ENCODE measurements at regions of chr11 and their contacts with region 1.

Region 1: GRCh38 chr11:112113539-112114457 is 27.1 kb downstream of the SDHD start:
- DNase-seq: no peak
- ATAC-seq: peak; percentile 80

Region 2: DNA sequence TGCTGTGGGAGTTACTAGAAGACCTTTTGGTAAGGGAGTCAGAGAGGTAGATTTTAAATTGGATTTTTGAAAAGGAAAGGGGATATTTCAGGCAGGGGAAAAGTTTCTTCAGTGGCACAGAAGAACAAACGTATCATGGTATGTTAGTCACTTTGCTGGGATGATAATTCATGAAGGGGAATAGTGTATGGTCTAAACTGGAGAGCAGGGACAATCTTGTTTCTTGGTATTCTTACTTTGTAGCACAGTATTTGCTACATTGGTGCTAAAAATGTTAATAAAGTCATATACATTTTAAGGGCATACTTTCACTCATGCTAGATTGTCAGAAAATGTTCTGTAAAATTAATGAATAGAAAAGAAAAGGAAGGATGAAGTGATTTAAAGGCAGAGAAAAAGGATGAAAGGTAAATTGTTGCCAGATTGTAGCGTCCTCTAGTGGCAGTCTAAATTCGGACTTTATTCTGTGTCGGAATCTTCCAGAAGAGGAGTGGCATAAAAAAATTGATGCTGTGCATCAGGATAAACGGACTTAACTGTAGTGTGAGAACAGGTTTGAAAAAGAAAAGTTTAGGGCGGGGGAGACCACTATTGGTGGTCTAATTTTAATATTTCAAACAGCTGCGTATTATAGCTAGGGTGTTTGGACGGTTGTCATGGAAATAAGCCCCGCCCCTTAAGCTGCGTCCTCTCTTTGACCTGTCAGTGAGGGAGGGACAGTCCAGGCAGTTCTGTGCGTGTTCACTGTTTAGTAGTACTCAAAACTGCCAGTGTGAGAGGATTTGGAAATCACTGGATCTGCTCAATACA is 61.2 kb after region 1 on chr11 and contains the start of gene BCO2:
- intact Hi-C with region 1: loop called (anchors 5 kb)
- DNase-seq: peak; percentile 88
- ATAC-seq: peak; percentile 94
- total RNA-seq, gene BCO2: 151 TPM

Region 3: DNA sequence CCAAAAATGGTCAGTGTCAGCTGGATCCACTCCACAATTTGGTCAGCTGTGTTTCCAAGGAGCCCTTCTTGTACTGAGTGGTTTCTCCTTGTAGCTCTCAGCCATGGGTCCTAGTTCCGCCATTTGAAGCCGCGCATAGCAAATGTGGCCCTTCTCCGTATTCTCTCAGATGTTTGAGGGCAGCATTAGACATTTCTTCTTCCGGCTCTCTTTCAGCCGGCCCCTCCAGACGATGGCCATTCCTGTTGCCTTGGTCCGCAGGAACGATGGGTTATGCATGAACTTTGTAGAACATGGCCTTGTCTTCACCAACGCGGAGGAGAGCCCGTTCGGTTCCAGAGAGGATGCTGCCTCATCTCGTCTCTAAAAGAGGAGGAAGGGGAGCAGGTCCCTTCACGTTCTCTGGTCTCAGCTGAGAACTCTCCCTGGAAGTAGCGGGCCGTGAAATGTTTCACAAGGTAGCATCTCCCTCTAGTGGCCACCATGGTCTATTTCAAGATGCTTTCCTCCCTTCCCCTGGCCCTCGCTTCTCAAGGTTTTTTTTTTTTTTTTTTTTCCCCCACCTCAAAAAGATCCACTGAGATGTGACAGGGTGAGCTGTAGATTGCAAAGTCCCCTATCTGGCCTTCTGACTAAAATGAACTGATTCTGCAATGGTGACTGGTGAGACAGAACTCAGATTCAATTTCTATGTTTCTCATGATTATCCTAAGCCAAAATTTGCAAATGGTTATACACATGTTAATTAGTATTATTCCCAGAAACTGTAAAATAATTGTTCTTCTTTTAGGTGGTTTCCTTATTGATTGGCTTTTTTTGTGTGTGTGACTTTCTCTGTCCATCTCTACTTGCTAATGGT is 166.7 kb after region 1 on chr11:
- intact Hi-C with region 1: loop called (anchors 5 kb)
- DNase-seq: no peak
- ATAC-seq: peak; percentile 97

Measured in Right ventricle myocardium superior (tissue), 1 donor.